MCF 10A (cell line): ENCODE measurements at regions of chr10 and their contacts with region 1.

Region 1: DNA sequence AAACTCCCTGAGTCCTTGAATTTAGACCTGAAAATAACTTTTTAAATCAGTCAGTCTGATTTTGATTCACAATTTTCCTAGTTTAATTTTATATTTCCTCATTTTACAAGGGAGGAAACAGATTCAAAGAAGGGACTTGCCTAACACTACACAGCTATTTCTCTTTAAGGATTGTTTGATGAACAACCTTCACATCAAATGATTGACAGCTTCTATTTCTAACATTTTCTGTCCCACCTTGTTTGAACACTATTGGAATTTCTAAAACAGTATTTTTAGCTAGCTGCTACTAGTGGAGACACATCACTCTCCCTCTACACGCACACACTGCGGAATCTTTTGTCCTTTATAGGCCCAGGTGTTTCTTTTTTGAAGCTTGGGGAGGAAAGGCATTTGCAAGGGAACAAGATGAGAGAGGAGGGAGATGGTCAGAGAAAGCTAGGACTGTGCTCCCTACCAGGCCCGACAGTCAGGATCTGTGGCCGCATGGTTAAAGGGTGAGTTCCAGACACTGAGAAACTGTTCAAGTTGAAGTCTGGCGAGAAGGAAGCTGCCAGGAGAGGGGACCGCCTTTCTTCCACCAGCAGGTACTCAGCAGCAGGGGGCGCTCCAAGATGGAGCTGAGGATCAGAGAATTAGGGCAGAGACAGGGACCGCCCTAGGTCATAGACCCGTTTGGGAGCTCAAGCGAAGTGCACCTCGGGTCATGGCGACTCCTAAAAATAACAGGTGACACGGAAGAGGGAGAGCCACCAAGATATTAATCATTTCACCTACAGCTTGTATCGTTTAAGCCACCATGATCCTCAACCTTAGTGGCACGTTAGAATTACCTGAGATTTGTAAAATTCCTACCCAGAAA is 49.7 kb downstream of the DNAJC12 start:
- DNase-seq: peak; percentile 47
- H3K4me3 Mint-ChIP-seq: no peak overlapping the region
- H3K27ac Mint-ChIP-seq: no peak overlapping the region
- H3K4me1 Mint-ChIP-seq: peaks cover 16% of the 10 kb centered on the region
- H3K27me3 Mint-ChIP-seq: no peaks in the 10 kb centered on the region
- CTCF ChIP-seq: peak; percentile 39

Region 2: DNA sequence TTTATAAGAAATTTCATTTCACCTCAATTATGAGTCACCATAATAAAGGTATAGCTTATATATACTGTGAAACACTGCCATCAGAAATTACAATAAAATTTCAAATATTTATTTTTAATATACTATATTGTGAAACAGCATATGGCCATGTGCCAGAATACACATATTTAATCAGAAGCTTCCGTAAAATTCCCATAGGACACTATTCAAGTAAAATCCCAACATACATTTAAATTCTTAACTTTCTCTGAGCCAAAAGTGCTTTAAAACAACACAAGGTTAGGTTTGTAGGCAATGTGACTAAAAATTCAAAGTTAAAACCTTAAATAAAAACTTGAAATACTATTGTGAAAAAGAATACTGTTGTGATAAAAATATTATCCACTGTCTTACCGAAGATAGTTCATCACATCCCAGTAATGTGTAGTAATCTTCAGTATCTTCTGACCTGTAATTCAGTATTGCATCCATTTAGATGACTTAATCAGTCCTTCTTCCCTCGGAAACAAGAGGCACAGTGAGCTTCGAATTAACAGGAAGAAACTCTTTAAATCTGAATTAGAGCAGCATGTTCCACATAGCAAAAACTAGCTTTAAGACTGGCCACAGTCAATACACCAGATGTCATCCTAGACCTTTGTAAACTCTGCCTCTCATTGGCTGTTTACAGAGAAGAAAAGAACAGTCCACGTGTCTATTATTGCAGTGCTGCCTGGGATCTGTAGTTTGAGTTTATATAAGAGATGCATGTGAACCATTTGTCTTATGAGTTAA is 49.5 kb after region 1 on chr10 and contains the start of gene DNAJC12:
- CTCF ChIA-PET with region 1: no interaction called
- POLR2A ChIA-PET with region 1: interaction called, 3 read pairs
- intact Hi-C with region 1: loop called (anchors 2 kb)
- DNase-seq: peak; percentile 69
- H3K4me3 Mint-ChIP-seq: peak within 1 kb of the TSS; percentile 79
- H3K27ac Mint-ChIP-seq: no peak within 1 kb of the TSS
- H3K4me1 Mint-ChIP-seq: peaks cover 6% of the 10 kb centered on the region
- H3K27me3 Mint-ChIP-seq: no peaks in the 10 kb centered on the region
- CTCF ChIP-seq: no peak
- total RNA-seq, gene DNAJC12: 9.5 and 13.8 TPM in 2 replicates